ENCODE measurements at regions of chr6 and their contacts with region 1.

Region 1: DNA sequence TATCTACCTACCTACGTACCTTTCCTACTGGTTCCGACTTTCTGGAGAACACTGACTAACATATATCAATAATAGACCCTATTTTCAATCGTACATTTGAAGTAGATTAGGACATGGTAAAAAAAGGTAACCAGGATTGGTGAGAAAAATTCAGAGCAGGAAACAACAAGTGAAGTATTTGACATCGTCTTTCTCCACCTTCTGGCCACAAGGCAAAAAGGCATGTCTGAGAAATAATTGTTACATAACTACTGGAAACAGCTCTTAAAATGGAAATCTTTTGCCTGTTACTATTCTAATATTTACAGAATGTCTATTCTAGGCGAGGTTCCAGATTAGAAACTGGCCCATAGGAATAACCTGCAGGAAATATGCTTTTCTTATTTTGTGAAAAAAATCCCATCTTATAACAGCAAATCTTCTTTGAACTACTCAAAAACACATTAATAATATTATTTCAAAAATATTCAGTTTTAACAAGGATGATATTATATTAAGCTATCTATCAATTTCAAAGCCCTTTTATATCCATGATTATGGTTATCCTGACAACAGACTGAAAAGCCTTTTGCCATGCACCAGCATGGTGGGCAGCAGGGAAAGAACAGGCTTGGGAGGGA is 80.8 kb downstream of the RCAN2 start:
- DNase-seq: peak in 13 of 35 experiments; percentile 3 to 76 (median 13)
- ATAC-seq: no peak
- H3K4me3 ChIP-seq: no peak overlapping the region
- H3K4me3 Mint-ChIP-seq: no peak overlapping the region
- H3K27ac ChIP-seq: no peak overlapping the region
- H3K27ac Mint-ChIP-seq: no peak overlapping the region
- H3K4me1 ChIP-seq: no peaks in the 10 kb centered on the region
- H3K4me1 Mint-ChIP-seq: no peaks in the 10 kb centered on the region
- H3K27me3 ChIP-seq: no peaks in the 10 kb centered on the region
- H3K27me3 Mint-ChIP-seq: no peaks in the 10 kb centered on the region

Region 2: GRCh38 chr6:44475779-44476434 is 1934.5 kb before region 1 on chr6:
- CTCF ChIA-PET with region 1: interaction called, 3 to 16 read pairs
- POLR2A ChIA-PET with region 1: no interaction called
- DNase-seq: peak; percentile 14 to 74 (median 51)
- ATAC-seq: peak; percentile 75 to 84 (median 83)
- H3K4me3 ChIP-seq: no peak overlapping the region
- H3K4me3 Mint-ChIP-seq: no peak overlapping the region
- H3K27ac ChIP-seq: no peak overlapping the region
- H3K27ac Mint-ChIP-seq: no peak overlapping the region
- H3K4me1 ChIP-seq: peaks cover 0 to 8% of the 10 kb centered on the region in 2 experiments
- H3K4me1 Mint-ChIP-seq: peaks cover 0 to 2% (median 0%) of the 10 kb centered on the region in 3 donors
- H3K27me3 ChIP-seq: peaks cover 0 to 29% of the 10 kb centered on the region in 2 experiments
- H3K27me3 Mint-ChIP-seq: peaks cover 6 to 8% of the 10 kb centered on the region in 2 donors

Region 3: DNA sequence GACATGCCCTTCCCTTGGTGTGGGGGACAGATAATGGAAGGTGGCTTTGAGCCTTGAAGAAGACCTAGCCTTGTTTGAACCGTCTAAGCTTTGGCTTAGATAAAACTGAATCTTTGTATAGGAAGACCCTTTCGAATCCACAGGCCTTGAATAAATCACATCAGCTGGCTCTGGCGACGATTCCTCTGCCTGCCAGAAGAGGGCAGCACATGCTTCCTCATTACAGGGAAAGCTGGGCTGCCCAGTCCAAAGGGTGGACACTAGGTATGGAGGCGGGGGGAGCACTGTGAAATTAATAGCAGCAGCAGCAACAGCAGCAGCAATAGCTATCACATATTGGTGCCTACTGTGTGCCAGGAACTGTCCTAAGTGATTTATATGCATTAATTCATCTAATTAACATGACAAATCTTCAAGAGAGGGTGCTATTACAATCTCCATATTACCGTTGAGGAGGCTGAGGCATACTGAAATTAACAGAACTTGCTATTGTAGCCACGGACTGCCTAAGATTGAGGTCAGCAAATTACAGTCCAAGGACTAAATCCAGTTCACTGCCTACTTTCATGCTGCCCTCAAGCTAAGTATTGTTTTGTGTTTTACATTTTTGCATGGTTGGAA is 479.9 kb before region 1 on chr6:
- CTCF ChIA-PET with region 1: interaction called, 4 to 24 read pairs
- POLR2A ChIA-PET with region 1: no interaction called
- DNase-seq: peak in 34 of 35 experiments; percentile 5 to 70 (median 34)
- ATAC-seq: peak in 2 of 4 experiments; percentile 46 to 63
- H3K4me3 ChIP-seq: no peak overlapping the region
- H3K4me3 Mint-ChIP-seq: no peak overlapping the region
- H3K27ac ChIP-seq: no peak overlapping the region
- H3K27ac Mint-ChIP-seq: peak overlapping the region in 1 of 2 donors; percentile 33
- H3K4me1 ChIP-seq: no peaks in the 10 kb centered on the region
- H3K4me1 Mint-ChIP-seq: peaks cover 0 to 4% (median 0%) of the 10 kb centered on the region in 3 donors
- H3K27me3 ChIP-seq: no peaks in the 10 kb centered on the region
- H3K27me3 Mint-ChIP-seq: no peaks in the 10 kb centered on the region

Region 4: GRCh38 chr6:46090115-46091079 is 320.0 kb before region 1 on chr6:
- CTCF ChIA-PET with region 1: interaction called, 14 to 77 read pairs
- POLR2A ChIA-PET with region 1: no interaction called
- DNase-seq: peak; percentile 9 to 77 (median 42)
- ATAC-seq: peak in 2 of 4 experiments; percentile 49 to 50
- H3K4me3 ChIP-seq: no peak overlapping the region
- H3K4me3 Mint-ChIP-seq: no peak overlapping the region
- H3K27ac ChIP-seq: no peak overlapping the region
- H3K27ac Mint-ChIP-seq: no peak overlapping the region
- H3K4me1 ChIP-seq: no peaks in the 10 kb centered on the region
- H3K4me1 Mint-ChIP-seq: no peaks in the 10 kb centered on the region
- H3K27me3 ChIP-seq: peaks cover 0 to 10% of the 10 kb centered on the region in 2 experiments
- H3K27me3 Mint-ChIP-seq: peaks cover 23 to 34% of the 10 kb centered on the region in 2 donors

Region 5: GRCh38 chr6:46191961-46192360 is 218.5 kb before region 1 on chr6:
- CTCF ChIA-PET with region 1: no interaction called
- POLR2A ChIA-PET with region 1: no interaction called
- DNase-seq: no peak
- ATAC-seq: no peak
- H3K4me3 ChIP-seq: no peak overlapping the region
- H3K4me3 Mint-ChIP-seq: no peak overlapping the region
- H3K27ac ChIP-seq: no peak overlapping the region
- H3K27ac Mint-ChIP-seq: no peak overlapping the region
- H3K4me1 ChIP-seq: no peaks in the 10 kb centered on the region
- H3K4me1 Mint-ChIP-seq: no peaks in the 10 kb centered on the region
- H3K27me3 ChIP-seq: no peaks in the 10 kb centered on the region
- H3K27me3 Mint-ChIP-seq: peaks cover 11 to 16% of the 10 kb centered on the region in 2 donors

Region 6: GRCh38 chr6:46221222-46221793 is 189.1 kb before region 1 on chr6:
- CTCF ChIA-PET with region 1: interaction called in 1 of 2 experiments, 16 read pairs
- POLR2A ChIA-PET with region 1: no interaction called
- DNase-seq: peak in 1 of 35 experiments; percentile 46
- ATAC-seq: peak in 1 of 4 experiments; percentile 48
- H3K4me3 ChIP-seq: no peak overlapping the region
- H3K4me3 Mint-ChIP-seq: no peak overlapping the region
- H3K27ac ChIP-seq: no peak overlapping the region
- H3K27ac Mint-ChIP-seq: no peak overlapping the region
- H3K4me1 ChIP-seq: no peaks in the 10 kb centered on the region
- H3K4me1 Mint-ChIP-seq: no peaks in the 10 kb centered on the region
- H3K27me3 ChIP-seq: peaks cover 0 to 2% of the 10 kb centered on the region in 2 experiments
- H3K27me3 Mint-ChIP-seq: peaks cover 0 to 3% of the 10 kb centered on the region in 2 donors

Region 7: GRCh38 chr6:46347669-46348068 is 62.8 kb before region 1 on chr6:
- CTCF ChIA-PET with region 1: no interaction called
- POLR2A ChIA-PET with region 1: no interaction called
- DNase-seq: no peak
- ATAC-seq: no peak
- H3K4me3 ChIP-seq: no peak overlapping the region
- H3K4me3 Mint-ChIP-seq: no peak overlapping the region
- H3K27ac ChIP-seq: no peak overlapping the region
- H3K27ac Mint-ChIP-seq: no peak overlapping the region
- H3K4me1 ChIP-seq: no peaks in the 10 kb centered on the region
- H3K4me1 Mint-ChIP-seq: no peaks in the 10 kb centered on the region
- H3K27me3 ChIP-seq: no peaks in the 10 kb centered on the region
- H3K27me3 Mint-ChIP-seq: peaks cover 19 to 32% of the 10 kb centered on the region in 2 donors

Measured in T-cell (primary cell).